ENCODE measurements at regions of chr5 and their contacts with region 1.

Region 1: GRCh38 chr5:169384661-169385060 is 83.7 kb upstream of the SLIT3 start:
- DNase-seq: no peak
- H3K4me3 Mint-ChIP-seq: no peak overlapping the region
- H3K27ac Mint-ChIP-seq: no peak overlapping the region
- H3K4me1 Mint-ChIP-seq: no peaks in the 10 kb centered on the region
- H3K27me3 Mint-ChIP-seq: no peaks in the 10 kb centered on the region
- CTCF ChIP-seq: no peak

Region 2: GRCh38 chr5:169325273-169325672 is 59.4 kb before region 1 on chr5:
- CTCF ChIA-PET with region 1: no interaction called
- POLR2A ChIA-PET with region 1: no interaction called
- intact Hi-C with region 1: loop called (anchors 10 kb)
- DNase-seq: no peak
- H3K4me3 Mint-ChIP-seq: no peak overlapping the region
- H3K27ac Mint-ChIP-seq: no peak overlapping the region
- H3K4me1 Mint-ChIP-seq: no peaks in the 10 kb centered on the region
- H3K27me3 Mint-ChIP-seq: no peaks in the 10 kb centered on the region
- CTCF ChIP-seq: no peak

Region 3: DNA sequence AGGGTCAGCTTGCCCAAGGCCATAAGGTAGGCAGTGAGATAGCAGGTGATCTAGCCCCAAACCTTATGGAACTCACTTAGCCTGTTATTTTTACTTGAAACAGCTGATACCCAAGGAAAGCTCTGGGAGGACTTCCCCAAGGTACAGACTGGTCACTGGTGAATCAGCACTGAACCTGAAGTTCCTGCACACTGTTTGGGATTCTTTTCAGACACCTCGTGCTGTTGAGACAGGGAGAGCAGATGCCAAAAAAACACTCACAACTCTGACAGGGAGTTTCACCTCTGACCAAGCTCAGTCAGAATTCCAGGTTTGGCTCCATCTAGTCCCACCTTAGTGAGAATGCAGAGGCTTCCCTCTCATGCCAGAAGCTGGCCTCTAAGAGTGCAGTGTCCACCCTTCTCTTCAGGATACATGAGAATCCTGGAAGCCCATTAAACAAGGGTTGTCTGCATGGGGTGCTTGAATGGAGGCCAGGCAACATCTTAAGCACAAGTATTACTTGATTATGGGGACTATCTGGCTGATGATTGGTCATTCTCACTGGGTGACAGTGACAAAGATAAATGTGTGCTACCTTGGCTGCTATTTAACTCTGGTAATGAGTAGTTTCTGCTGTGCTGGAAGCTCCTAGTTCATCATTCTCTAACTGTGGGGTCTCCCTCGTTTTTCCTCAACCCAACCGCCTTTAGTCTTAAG is 39.1 kb after region 1 on chr5:
- CTCF ChIA-PET with region 1: no interaction called
- POLR2A ChIA-PET with region 1: no interaction called
- intact Hi-C with region 1: no loop called
- DNase-seq: no peak
- H3K4me3 Mint-ChIP-seq: no peak overlapping the region
- H3K27ac Mint-ChIP-seq: peak overlapping the region; percentile 20
- H3K4me1 Mint-ChIP-seq: peaks cover 16% of the 10 kb centered on the region
- H3K27me3 Mint-ChIP-seq: no peaks in the 10 kb centered on the region
- CTCF ChIP-seq: no peak

Region 4: GRCh38 chr5:169736653-169737052 is 352.0 kb after region 1 on chr5:
- CTCF ChIA-PET with region 1: no interaction called
- POLR2A ChIA-PET with region 1: no interaction called
- intact Hi-C with region 1: no loop called
- DNase-seq: no peak
- H3K4me3 Mint-ChIP-seq: no peak overlapping the region
- H3K27ac Mint-ChIP-seq: no peak overlapping the region
- H3K4me1 Mint-ChIP-seq: no peaks in the 10 kb centered on the region
- H3K27me3 Mint-ChIP-seq: no peaks in the 10 kb centered on the region
- CTCF ChIP-seq: no peak

Measured in MCF 10A (cell line).